CD4-positive, alpha-beta memory T cell (primary cell): ENCODE measurements at regions of chr14 and their contacts with region 1.

Region 1: DNA sequence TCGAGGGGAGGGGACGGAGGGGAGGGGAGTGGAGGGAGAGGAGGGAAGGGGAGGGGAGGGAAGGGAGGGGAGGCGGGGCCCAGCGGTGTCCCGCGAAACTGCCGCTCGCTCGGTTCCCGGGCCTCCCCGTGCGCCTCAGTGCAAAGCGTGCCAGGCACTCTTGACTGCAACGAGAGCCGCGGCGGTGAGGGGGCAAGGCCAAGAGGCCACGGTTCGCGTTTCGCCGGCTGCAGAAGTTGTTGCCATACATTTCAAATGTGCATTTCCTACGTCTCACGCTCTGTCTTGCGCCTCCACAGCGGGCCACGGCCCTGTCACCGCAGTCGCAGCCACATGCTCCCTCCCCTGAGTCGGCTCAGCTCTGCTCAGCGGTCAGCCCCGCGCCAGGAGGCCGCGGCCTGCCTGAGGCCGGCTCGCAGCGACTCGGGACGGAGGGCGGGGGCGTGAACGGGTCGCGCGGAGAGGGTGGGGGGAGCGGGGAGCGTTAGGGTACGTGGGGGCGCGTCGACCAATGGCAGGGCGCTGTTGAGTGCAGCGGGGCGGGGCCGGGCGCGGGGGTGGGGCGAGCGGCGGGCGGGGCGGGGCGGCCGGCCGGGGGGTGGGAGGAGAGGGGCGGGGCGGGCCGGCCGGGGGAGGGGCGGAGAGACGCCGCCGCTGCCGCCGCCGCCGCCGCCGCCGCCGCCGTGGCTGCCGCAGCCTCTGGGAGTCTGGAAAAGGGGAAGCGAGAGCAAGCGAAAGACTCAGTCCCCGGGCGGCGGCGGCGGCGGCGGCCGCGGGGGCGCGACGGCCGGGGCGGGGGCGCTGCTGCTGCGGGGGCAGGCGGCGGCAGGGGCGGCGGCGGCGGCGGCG is at the start of gene PPP2R5C:
- DNase-seq: peak; percentile 86 to 90 (median 87)
- H3K4me3 ChIP-seq: peak within 1 kb of the TSS; percentile 49 to 94
- H3K4me3 Mint-ChIP-seq: peak within 1 kb of the TSS; percentile 92 to 96 (median 94)
- H3K27ac ChIP-seq: peak within 1 kb of the TSS; percentile 82
- H3K27ac Mint-ChIP-seq: peak within 1 kb of the TSS; percentile 92 to 96 (median 95)
- H3K4me1 ChIP-seq: peaks cover 44% of the 10 kb centered on the region
- H3K4me1 Mint-ChIP-seq: peaks cover 32 to 45% (median 39%) of the 10 kb centered on the region in 4 donors
- H3K27me3 ChIP-seq: no peaks in the 10 kb centered on the region
- H3K27me3 Mint-ChIP-seq: no peaks in the 10 kb centered on the region
- total RNA-seq, gene PPP2R5C: 584 to 620 TPM

Region 2: GRCh38 chr14:101731187-101732080 is 29.8 kb before region 1 on chr14:
- CTCF ChIA-PET with region 1: interaction called, 7 read pairs
- POLR2A ChIA-PET with region 1: interaction called, 28 read pairs
- intact Hi-C with region 1: loop called (anchors 1 kb)
- DNase-seq: peak; percentile 83 to 96 (median 83)
- H3K4me3 ChIP-seq: peak overlapping the region; percentile 31 to 58
- H3K4me3 Mint-ChIP-seq: peak overlapping the region; percentile 68 to 86 (median 82)
- H3K27ac ChIP-seq: peak overlapping the region; percentile 75
- H3K27ac Mint-ChIP-seq: peak overlapping the region; percentile 85 to 100 (median 99)
- H3K4me1 ChIP-seq: peaks cover 35% of the 10 kb centered on the region
- H3K4me1 Mint-ChIP-seq: peaks cover 29 to 52% (median 42%) of the 10 kb centered on the region in 4 donors
- H3K27me3 ChIP-seq: no peaks in the 10 kb centered on the region
- H3K27me3 Mint-ChIP-seq: no peaks in the 10 kb centered on the region

Region 3: DNA sequence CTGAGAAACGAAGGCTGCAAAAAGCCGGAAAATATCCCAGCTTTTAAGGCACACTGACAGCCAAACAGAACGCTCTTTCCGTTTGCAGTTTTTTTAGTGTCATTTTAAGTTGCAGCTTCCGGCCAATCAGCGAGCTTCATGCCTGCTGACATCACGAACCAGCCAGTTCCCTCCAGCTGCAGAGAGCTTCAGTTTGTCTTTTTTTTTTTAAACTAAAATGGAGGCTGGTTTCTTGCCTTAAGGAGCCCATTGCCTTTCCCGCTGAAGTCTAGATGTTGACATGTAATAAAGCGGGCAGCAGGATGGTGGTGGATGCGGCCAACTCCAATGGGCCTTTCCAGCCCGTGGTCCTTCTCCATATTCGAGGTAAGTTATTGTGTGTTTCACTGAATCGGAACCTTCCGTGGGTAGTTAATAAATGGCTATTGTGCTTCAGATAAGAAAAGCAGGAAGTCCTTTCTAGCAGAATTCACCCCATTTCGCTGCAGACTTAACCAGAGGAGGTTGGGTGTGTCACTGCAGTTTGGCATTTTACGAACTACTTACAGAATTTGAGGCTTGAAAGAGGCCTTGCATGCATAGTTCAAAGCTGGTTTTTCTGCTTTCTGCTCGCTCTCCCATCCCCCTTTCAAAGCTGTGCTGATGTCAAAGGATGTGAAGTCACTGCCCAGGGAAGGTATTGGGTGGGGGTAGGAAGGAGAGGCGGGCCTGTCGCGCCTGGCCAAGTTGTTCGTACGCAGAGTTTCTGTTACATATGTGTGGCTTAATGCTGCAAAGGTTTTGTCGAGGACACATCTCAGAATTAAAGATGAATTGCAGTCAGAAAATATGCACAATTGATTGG is 48.6 kb after region 1 on chr14:
- CTCF ChIA-PET with region 1: no interaction called
- POLR2A ChIA-PET with region 1: interaction called, 20 read pairs
- intact Hi-C with region 1: loop called (anchors 2 kb)
- DNase-seq: peak; percentile 91 to 97 (median 95)
- H3K4me3 ChIP-seq: peak overlapping the region; percentile 85 to 97
- H3K4me3 Mint-ChIP-seq: peak overlapping the region; percentile 90 to 97 (median 95)
- H3K27ac ChIP-seq: peak overlapping the region; percentile 98
- H3K27ac Mint-ChIP-seq: peak overlapping the region; percentile 97 to 100 (median 99)
- H3K4me1 ChIP-seq: peaks cover 46% of the 10 kb centered on the region
- H3K4me1 Mint-ChIP-seq: peaks cover 31 to 62% (median 46%) of the 10 kb centered on the region in 4 donors
- H3K27me3 ChIP-seq: no peaks in the 10 kb centered on the region
- H3K27me3 Mint-ChIP-seq: no peaks in the 10 kb centered on the region

Region 4: GRCh38 chr14:101947906-101948665 is 186.8 kb after region 1 on chr14:
- CTCF ChIA-PET with region 1: no interaction called
- POLR2A ChIA-PET with region 1: interaction called, 8 read pairs
- intact Hi-C with region 1: loop called (anchors 1 kb)
- DNase-seq: peak; percentile 99 to 100 (median 100)
- H3K4me3 ChIP-seq: peak overlapping the region; percentile 87 to 98
- H3K4me3 Mint-ChIP-seq: peak overlapping the region; percentile 92 to 99 (median 96)
- H3K27ac ChIP-seq: peak overlapping the region; percentile 94
- H3K27ac Mint-ChIP-seq: peak overlapping the region; percentile 99 to 100 (median 100)
- H3K4me1 ChIP-seq: peaks cover 13% of the 10 kb centered on the region
- H3K4me1 Mint-ChIP-seq: peaks cover 6 to 31% (median 21%) of the 10 kb centered on the region in 4 donors
- H3K27me3 ChIP-seq: peaks cover 5% of the 10 kb centered on the region
- H3K27me3 Mint-ChIP-seq: peaks cover 9 to 16% of the 10 kb centered on the region in 2 donors

Region 5: DNA sequence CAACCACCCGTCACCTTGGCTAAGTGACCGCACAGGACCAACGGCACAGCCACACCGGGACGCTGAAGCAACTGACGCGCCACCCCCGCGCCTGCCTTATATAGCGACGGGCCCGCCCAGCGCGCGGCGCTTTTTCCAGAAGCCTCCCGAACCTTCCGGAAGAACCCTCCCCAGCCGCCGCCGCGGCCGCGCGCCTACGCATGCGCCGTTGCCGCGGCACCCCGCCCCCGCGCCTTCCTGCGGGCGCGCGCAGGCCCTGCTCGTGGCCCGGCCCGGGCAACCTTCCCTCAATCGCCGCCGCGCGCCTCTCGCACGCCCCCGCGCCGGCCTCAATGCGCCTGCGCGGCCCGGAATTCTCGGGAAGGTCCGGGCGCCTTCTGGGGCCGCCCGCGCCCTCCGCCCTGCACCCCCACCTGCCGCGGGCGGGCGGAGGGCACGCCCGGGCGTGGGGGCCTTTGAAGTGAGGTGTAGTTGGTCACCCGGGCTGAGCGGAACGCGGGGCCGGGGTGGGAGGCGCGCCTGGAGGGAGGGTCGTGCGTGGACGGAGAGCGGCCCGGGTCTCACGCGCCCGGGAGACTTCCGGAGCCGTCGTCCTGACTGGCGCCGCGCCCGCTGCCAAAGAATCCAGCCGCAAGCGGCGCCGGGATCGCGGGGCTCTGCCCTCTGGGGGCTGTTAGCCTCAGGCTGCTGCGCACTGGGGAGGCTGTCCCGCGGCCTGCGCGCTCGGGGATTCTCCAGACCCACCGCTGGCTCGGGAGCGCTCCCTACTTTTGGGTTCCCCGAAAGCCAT is 325.9 kb after region 1 on chr14 and contains the start of gene HSP90AA1:
- CTCF ChIA-PET with region 1: no interaction called
- POLR2A ChIA-PET with region 1: interaction called, 3 read pairs
- intact Hi-C with region 1: loop called (anchors 1 kb)
- DNase-seq: peak; percentile 90 to 95 (median 94)
- H3K4me3 ChIP-seq: peak within 1 kb of the TSS; percentile 80 to 85
- H3K4me3 Mint-ChIP-seq: peak within 1 kb of the TSS; percentile 91 to 99 (median 97)
- H3K27ac ChIP-seq: peak within 1 kb of the TSS; percentile 94
- H3K27ac Mint-ChIP-seq: peak within 1 kb of the TSS; percentile 93 to 99 (median 97)
- H3K4me1 ChIP-seq: peaks cover 51% of the 10 kb centered on the region
- H3K4me1 Mint-ChIP-seq: peaks cover 46 to 68% (median 56%) of the 10 kb centered on the region in 4 donors
- H3K27me3 ChIP-seq: no peaks in the 10 kb centered on the region
- H3K27me3 Mint-ChIP-seq: no peaks in the 10 kb centered on the region
- total RNA-seq, gene HSP90AA1: 275 to 297 TPM

Region 6: GRCh38 chr14:102304611-102305509 is 543.6 kb after region 1 on chr14 and contains the start of gene MOK:
- CTCF ChIA-PET with region 1: no interaction called
- POLR2A ChIA-PET with region 1: no interaction called
- intact Hi-C with region 1: loop called (anchors 1 kb)
- DNase-seq: peak; percentile 96 to 98 (median 98)
- H3K4me3 ChIP-seq: peak within 1 kb of the TSS; percentile 73 to 82
- H3K4me3 Mint-ChIP-seq: peak within 1 kb of the TSS; percentile 88 to 98 (median 96)
- H3K27ac ChIP-seq: peak within 1 kb of the TSS; percentile 63
- H3K27ac Mint-ChIP-seq: peak within 1 kb of the TSS; percentile 95 to 100 (median 99)
- H3K4me1 ChIP-seq: peaks cover 5% of the 10 kb centered on the region
- H3K4me1 Mint-ChIP-seq: peaks cover 5 to 11% (median 8%) of the 10 kb centered on the region in 4 donors
- H3K27me3 ChIP-seq: no peaks in the 10 kb centered on the region
- H3K27me3 Mint-ChIP-seq: peaks cover 2 to 6% of the 10 kb centered on the region in 2 donors
- total RNA-seq, gene MOK: 0.73 to 1.3 TPM